ENCODE measurements at regions of chr2 and their contacts with region 1.

Region 1: GRCh38 chr2:38665854-38666555 is at the start of gene GALM:
- DNase-seq: peak; percentile 54
- CTCF ChIP-seq: no peak

Region 2: DNA sequence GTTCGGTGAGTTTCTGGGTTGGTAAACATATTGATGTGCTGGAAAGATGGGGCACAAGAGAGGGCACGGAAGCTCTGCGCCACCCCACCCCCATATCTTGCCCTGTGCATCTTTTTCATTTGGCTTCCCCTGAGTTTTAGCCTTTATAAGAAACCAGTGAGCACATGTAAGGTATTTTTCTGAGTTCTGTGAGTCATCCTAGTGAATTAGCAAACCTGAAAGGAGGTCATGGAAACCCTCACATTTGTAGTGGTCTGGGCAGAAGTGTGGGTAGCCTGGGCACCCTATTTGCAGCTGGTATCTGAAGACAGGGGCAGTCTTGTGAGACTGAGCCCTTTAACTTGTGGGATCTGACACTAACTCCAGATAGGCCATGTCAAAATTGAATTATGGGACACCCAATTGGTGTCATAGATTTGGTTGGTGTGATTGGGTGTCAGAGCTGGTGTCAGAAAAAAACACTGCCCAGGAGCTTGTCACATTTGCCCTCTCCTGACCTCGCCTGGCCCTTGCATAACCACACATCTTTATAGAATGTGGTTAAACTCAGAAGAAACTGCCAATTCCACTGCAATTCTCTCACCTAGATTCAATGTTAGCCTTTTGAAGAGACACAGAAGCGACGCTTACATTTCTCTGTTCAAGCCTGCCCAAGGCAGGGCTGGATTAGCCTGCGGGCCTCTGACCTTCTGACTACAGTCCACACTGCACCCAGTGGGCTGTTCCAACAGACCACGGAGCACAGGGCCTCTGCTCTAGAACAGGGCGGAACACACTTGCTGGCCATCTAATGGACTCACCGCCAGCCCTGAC is 12.1 kb before region 1 on chr2:
- CTCF ChIA-PET with region 1: interaction called, 32 read pairs
- POLR2A ChIA-PET with region 1: interaction called, 3 read pairs
- DNase-seq: no peak
- CTCF ChIP-seq: no peak

Region 3: GRCh38 chr2:38682008-38682575 is 16.1 kb after region 1 on chr2:
- CTCF ChIA-PET with region 1: interaction called, 12 read pairs
- POLR2A ChIA-PET with region 1: no interaction called
- DNase-seq: no peak
- CTCF ChIP-seq: no peak

Measured in GM10248 (cell line).